ENCODE measurements at regions of chr3 and their contacts with region 1.

Region 1: DNA sequence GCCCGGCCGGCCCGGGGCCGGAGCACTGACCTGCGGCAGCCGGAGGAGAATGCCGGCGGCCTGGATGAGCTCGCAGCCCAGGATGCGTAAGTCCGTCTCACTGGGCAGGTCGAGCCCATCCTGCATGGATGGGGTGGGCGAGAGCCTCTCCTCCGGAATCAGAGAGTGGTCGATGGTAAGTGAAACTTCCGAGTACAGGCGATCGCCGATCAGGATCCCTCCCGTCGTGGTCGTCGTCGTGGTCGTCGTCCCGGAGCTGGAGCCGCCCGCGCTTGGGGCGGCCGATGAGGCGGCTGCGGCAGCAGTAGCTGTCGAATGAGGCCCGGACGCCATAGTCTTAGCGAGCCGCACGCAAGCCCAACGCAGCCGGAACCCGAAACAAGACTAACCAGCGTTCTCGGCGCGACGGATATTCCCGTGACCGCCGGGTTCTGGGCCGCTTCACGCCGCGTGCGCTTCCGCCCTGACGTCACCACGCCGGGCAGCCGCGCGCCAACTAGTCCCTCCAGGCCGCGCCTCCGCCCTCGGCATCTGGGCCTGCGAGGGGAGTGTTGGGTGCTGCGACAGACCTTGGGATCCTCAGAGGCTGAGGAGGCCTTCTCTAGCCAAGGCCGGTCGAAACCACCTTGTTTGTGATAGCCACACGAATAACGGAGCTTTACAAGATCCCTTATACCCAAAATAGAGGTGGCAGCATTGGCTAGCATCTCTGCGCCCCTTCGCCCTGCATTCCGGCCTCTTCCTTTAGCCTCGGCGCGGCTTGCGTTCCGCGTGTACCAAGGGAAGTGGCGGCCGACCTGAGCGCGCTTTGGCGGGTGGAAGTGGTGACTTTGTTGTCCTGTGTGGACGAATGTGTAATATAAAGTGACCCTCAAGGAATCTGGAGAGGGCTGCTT is at the start of gene CCNL1:
- DNase-seq: peak; percentile 86 to 99
- H3K4me3 ChIP-seq: peak within 1 kb of the TSS; percentile 86 to 100
- H3K27ac ChIP-seq: peak within 1 kb of the TSS; percentile 99 to 100
- H3K4me1 ChIP-seq: peaks cover 6 to 38% of the 10 kb centered on the region in 2 donors
- H3K27me3 ChIP-seq: no peaks in the 10 kb centered on the region
- CTCF ChIP-seq: no peak
- total RNA-seq, gene CCNL1: 241 TPM

Region 2: DNA sequence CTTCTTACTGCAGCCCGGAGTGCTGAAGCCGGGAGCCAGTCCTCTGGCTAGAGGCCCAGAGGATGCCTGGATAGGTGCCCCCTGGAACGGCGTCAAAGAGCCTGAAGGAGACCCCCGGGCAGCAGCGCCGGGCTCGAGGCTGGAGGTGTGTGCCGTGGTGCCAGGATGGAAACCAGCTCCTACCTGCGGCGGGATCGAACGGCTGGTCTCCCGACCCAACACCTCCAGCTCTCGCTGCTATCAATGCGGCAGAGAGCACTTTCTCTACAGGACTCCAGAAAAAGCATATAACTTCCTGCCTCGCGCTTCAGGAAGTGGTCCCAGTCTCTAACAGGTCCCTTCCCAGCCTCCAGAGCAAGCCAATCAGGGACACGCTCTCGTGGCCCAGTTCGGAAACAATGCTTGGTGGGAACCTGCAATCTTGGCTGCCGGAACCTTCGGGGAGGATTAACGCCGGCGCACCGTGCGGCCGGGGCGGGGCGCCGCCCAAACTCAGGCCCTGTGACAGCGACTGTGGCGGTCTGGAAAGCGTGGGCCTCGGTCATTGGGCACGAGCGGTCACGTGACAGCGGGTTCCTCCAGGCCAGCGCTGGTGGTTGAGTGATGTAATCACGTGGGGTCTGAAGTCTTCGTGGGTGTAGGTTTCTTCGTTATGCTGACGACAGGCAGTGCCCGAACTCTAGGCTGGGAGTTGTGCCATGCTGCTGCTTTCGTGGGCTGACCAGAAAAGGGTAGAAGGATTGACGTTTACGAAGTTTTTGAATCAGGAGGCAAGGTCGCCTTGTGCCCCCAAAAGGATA is 1305.7 kb before region 1 on chr3 and contains the start of gene SLC33A1:
- intact Hi-C with region 1: loop called (anchors 10 kb)
- DNase-seq: peak; percentile 97 to 100
- H3K4me3 ChIP-seq: peak within 1 kb of the TSS; percentile 84 to 89
- H3K27ac ChIP-seq: peak within 1 kb of the TSS; percentile 89 to 93
- H3K4me1 ChIP-seq: peaks cover 10 to 36% of the 10 kb centered on the region in 2 donors
- H3K27me3 ChIP-seq: no peaks in the 10 kb centered on the region
- CTCF ChIP-seq: no peak
- total RNA-seq, gene SLC33A1: 15.6 TPM

Region 3: DNA sequence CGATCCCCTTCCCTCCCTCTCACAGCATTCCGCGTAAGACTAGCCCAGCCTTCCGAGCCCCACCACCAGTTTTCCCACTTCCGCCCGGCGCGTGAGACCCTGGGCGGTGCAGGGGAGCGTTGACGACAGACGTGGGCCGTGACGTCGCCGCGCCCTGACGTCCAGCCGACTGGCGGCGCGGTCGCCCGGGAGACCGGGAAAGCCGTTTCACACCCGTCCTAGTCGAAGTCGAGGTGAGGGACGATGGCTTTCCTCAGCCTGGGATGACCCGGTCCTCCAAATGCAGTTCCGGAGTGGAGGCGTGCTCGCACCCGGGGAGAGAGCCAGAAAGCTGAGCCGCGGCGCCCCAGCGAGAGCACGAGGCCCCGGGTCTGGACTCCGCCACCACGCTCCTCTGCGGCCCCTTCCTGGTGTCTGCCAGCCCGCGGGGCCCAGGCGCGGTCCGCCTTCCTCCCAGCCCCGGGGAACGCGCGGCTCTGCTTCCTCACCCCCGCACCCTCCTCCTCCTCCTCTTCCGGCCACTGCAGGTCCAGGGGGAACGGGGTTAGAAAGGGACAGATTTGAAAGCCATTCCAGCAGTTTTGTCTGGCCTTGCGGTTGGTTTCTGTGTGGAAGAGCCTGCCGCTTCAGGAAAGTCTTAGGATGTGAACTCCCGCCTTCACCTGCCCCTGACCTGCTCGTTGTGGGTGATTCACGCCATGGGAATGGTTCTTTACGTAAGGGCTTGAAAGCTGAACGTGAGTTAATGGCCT is 333.7 kb before region 1 on chr3 and contains the start of gene LEKR1:
- intact Hi-C with region 1: loop called (anchors 5 kb)
- DNase-seq: peak; percentile 33 to 86
- H3K4me3 ChIP-seq: peak within 1 kb of the TSS; percentile 65 to 95
- H3K27ac ChIP-seq: peak within 1 kb of the TSS; percentile 87 to 92
- H3K4me1 ChIP-seq: peaks cover 0 to 5% of the 10 kb centered on the region in 2 donors
- H3K27me3 ChIP-seq: no peaks in the 10 kb centered on the region
- CTCF ChIP-seq: no peak
- total RNA-seq, gene LEKR1: not detected

Region 4: GRCh38 chr3:157174649-157175498 is 14.9 kb after region 1 on chr3:
- intact Hi-C with region 1: loop called (anchors 1 kb)
- DNase-seq: peak; percentile 94 to 99
- H3K4me3 ChIP-seq: peak overlapping the region; percentile 75 to 76
- H3K27ac ChIP-seq: peak overlapping the region; percentile 96 to 98
- H3K4me1 ChIP-seq: peaks cover 0 to 17% of the 10 kb centered on the region in 2 donors
- H3K27me3 ChIP-seq: no peaks in the 10 kb centered on the region
- CTCF ChIP-seq: no peak

Region 5: DNA sequence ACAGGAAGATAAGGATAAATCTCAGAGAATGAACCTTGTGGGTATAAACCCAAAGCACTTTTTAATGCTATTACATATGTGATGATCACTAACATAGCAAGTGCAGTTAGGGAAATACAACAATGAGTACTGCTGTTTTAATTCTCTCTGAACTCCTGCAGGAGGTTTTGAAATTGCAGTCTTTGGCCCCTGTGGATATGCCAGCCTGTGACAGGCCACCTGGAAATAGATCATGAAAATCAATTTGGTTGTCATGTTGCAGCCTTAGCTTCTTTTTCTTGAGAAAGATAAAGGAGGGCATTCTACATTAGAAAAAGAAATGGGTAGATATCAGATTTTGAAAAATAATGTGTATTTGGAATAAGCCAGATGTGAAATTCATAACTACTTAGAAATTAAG is 1053.4 kb after region 1 on chr3:
- intact Hi-C with region 1: no loop called
- DNase-seq: no peak
- H3K4me3 ChIP-seq: no peak overlapping the region
- H3K27ac ChIP-seq: no peak overlapping the region
- H3K4me1 ChIP-seq: no peaks in the 10 kb centered on the region
- H3K27me3 ChIP-seq: no peaks in the 10 kb centered on the region
- CTCF ChIP-seq: no peak

Region 6: GRCh38 chr3:158644345-158644908 is 1484.4 kb after region 1 on chr3 and contains the start of gene GFM1:
- intact Hi-C with region 1: loop called (anchors 10 kb)
- DNase-seq: peak; percentile 64 to 97
- H3K4me3 ChIP-seq: peak within 1 kb of the TSS; percentile 67 to 80
- H3K27ac ChIP-seq: peak within 1 kb of the TSS; percentile 75 to 94
- H3K4me1 ChIP-seq: peaks cover 0 to 11% of the 10 kb centered on the region in 2 donors
- H3K27me3 ChIP-seq: no peaks in the 10 kb centered on the region
- CTCF ChIP-seq: peak; percentile 65 to 95 (median 92)
- total RNA-seq, gene GFM1: 13.9 TPM

Region 7: DNA sequence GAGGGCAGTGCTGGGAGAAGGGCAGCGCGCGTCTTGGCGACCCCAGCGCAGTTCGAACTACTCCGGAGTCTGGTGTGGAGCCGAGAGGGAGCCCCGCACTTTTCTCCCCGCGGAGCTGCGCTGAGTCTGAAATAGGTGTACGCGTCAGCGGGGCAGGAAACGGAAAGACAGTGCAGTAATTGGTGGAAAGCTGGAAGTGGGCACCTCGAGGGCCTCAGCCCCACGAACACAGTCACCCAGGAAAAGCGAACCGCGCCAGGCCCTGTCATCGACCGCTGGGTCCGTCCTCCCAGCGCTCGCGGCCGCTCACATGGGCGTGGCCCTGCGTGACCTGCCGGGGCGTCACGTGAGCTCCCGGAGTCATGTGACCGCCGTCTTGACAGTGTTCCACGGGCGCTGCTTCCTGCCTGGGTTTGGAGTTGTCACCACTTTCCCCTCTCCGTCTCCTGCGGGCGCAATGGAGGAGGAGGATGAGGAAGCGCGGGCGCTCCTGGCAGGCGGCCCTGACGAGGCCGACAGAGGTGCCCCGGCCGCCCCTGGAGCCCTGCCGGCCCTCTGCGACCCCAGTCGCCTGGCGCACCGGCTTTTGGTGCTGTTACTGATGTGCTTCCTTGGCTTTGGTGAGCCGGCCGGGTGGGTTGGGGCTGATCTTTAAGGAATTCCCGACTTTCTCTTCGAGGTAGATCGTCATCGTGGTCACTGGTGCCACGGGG is 1641.8 kb after region 1 on chr3 and contains the start of gene MFSD1:
- intact Hi-C with region 1: loop called (anchors 10 kb)
- DNase-seq: peak; percentile 88 to 98
- H3K4me3 ChIP-seq: peak within 1 kb of the TSS; percentile 77 to 95
- H3K27ac ChIP-seq: peak within 1 kb of the TSS; percentile 71 to 89
- H3K4me1 ChIP-seq: peaks cover 3 to 9% of the 10 kb centered on the region in 2 donors
- H3K27me3 ChIP-seq: no peaks in the 10 kb centered on the region
- CTCF ChIP-seq: no peak
- total RNA-seq, gene MFSD1: 35.9 TPM

Measured in ascending aorta (tissue), 2 donors.